Naive thymus-derived CD4-positive, alpha-beta T cell (primary cell): ENCODE measurements at regions of chr16 and their contacts with region 1.

Region 1: DNA sequence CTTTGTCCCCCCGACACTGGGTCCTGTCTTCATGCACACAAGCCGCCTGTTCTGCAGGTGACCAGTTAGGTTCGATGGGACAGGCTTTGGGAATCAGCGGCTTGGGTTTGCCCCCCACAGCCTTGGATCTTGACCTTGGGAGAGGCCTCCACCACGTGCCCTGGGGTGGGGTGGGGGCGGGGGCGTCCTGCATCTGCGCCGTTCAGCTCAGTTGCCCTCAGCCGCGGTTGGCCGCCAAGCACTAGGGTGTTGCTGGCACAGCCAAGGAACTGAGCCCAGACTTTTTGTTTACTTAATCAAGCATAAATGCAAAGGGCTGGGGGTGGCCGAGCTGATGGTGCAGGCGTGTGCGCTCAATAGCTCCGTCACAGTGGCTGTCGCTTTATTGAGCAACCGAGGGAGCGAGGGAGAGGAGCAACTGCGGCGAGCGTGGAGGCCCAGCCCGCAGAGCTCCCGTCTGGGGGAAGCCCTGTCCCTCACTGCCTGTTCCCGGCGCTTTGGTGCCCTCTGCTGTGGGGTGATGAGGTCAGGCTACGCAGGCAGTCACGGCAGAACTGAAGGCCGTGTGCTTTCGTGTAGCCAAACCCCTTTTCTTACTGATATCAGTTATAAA is 33.9 kb downstream of the JPH3 start:
- DNase-seq: peak; percentile 65 to 81 (median 75)
- ATAC-seq: peak; percentile 94
- H3K4me3 ChIP-seq: peak overlapping the region; percentile 56
- H3K4me3 Mint-ChIP-seq: peak overlapping the region; percentile 55 to 91 (median 88)
- H3K27ac ChIP-seq: peak overlapping the region; percentile 53
- H3K27ac Mint-ChIP-seq: peak overlapping the region in 8 of 9 donors; percentile 41 to 94 (median 76)
- H3K4me1 ChIP-seq: peaks cover 6 to 8% of the 10 kb centered on the region in 2 donors
- H3K4me1 Mint-ChIP-seq: peaks cover 3 to 16% (median 11%) of the 10 kb centered on the region in 7 donors
- H3K27me3 ChIP-seq: no peaks in the 10 kb centered on the region
- H3K27me3 Mint-ChIP-seq: peaks cover 0 to 13% (median 6%) of the 10 kb centered on the region in 5 donors

Region 2: GRCh38 chr16:87316923-87317749 is 319.0 kb before region 1 on chr16 and contains the start of gene C16orf95:
- CTCF ChIA-PET with region 1: interaction called, 13 read pairs
- POLR2A ChIA-PET with region 1: interaction called, 3 read pairs
- intact Hi-C with region 1: loop called in 1 of 2 experiments (anchors 2 kb)
- DNase-seq: peak; percentile 93 to 100 (median 96)
- ATAC-seq: peak; percentile 96
- H3K4me3 ChIP-seq: peak within 1 kb of the TSS; percentile 86
- H3K4me3 Mint-ChIP-seq: peak within 1 kb of the TSS; percentile 92 to 100 (median 97)
- H3K27ac ChIP-seq: peak within 1 kb of the TSS; percentile 91
- H3K27ac Mint-ChIP-seq: peak within 1 kb of the TSS; percentile 91 to 99 (median 94)
- H3K4me1 ChIP-seq: peaks cover 8 to 11% of the 10 kb centered on the region in 2 donors
- H3K4me1 Mint-ChIP-seq: peaks cover 11 to 23% (median 16%) of the 10 kb centered on the region in 7 donors
- H3K27me3 ChIP-seq: no peaks in the 10 kb centered on the region
- H3K27me3 Mint-ChIP-seq: peaks cover 0 to 2% (median 0%) of the 10 kb centered on the region in 5 donors
- total RNA-seq, gene C16orf95: 1.3 to 8.6 (median 2.6) TPM

Region 3: GRCh38 chr16:87393680-87394055 is 242.5 kb before region 1 on chr16:
- CTCF ChIA-PET with region 1: interaction called, 7 read pairs
- POLR2A ChIA-PET with region 1: no interaction called
- intact Hi-C with region 1: loop called in 1 of 2 experiments (anchors 1 kb)
- DNase-seq: no peak
- ATAC-seq: no peak
- H3K4me3 ChIP-seq: peak overlapping the region; percentile 84
- H3K4me3 Mint-ChIP-seq: peak overlapping the region; percentile 90 to 96 (median 93)
- H3K27ac ChIP-seq: peak overlapping the region; percentile 89
- H3K27ac Mint-ChIP-seq: peak overlapping the region; percentile 78 to 97 (median 94)
- H3K4me1 ChIP-seq: peaks cover 17 to 22% of the 10 kb centered on the region in 2 donors
- H3K4me1 Mint-ChIP-seq: peaks cover 25 to 55% (median 47%) of the 10 kb centered on the region in 7 donors
- H3K27me3 ChIP-seq: no peaks in the 10 kb centered on the region
- H3K27me3 Mint-ChIP-seq: no peaks in the 10 kb centered on the region

Region 4: GRCh38 chr16:87461466-87461991 is 174.6 kb before region 1 on chr16:
- CTCF ChIA-PET with region 1: interaction called, 8 read pairs
- POLR2A ChIA-PET with region 1: no interaction called
- intact Hi-C with region 1: loop called in 1 of 2 experiments (anchors 1 kb)
- DNase-seq: peak in 1 of 9 donors; percentile 6
- ATAC-seq: no peak
- H3K4me3 ChIP-seq: no peak overlapping the region
- H3K4me3 Mint-ChIP-seq: no peak overlapping the region
- H3K27ac ChIP-seq: no peak overlapping the region
- H3K27ac Mint-ChIP-seq: peak overlapping the region in 4 of 9 donors; percentile 34 to 46 (median 43)
- H3K4me1 ChIP-seq: peaks cover 17 to 27% of the 10 kb centered on the region in 2 donors
- H3K4me1 Mint-ChIP-seq: peaks cover 32 to 43% (median 38%) of the 10 kb centered on the region in 7 donors
- H3K27me3 ChIP-seq: no peaks in the 10 kb centered on the region
- H3K27me3 Mint-ChIP-seq: peaks cover 0 to 4% (median 0%) of the 10 kb centered on the region in 5 donors

Region 5: GRCh38 chr16:87550496-87550961 is 85.6 kb before region 1 on chr16:
- CTCF ChIA-PET with region 1: interaction called, 7 read pairs
- POLR2A ChIA-PET with region 1: no interaction called
- intact Hi-C with region 1: loop called (anchors 1 to 2 kb)
- DNase-seq: peak; percentile 26 to 75 (median 49)
- ATAC-seq: peak; percentile 63
- H3K4me3 ChIP-seq: no peak overlapping the region
- H3K4me3 Mint-ChIP-seq: no peak overlapping the region
- H3K27ac ChIP-seq: no peak overlapping the region
- H3K27ac Mint-ChIP-seq: peak overlapping the region in 1 of 9 donors; percentile 65
- H3K4me1 ChIP-seq: no peaks in the 10 kb centered on the region
- H3K4me1 Mint-ChIP-seq: peaks cover 0 to 11% (median 4%) of the 10 kb centered on the region in 7 donors
- H3K27me3 ChIP-seq: no peaks in the 10 kb centered on the region
- H3K27me3 Mint-ChIP-seq: peaks cover 2 to 31% (median 18%) of the 10 kb centered on the region in 5 donors

Region 6: GRCh38 chr16:87621976-87622713 is 14.0 kb before region 1 on chr16:
- CTCF ChIA-PET with region 1: interaction called, 12 read pairs
- POLR2A ChIA-PET with region 1: no interaction called
- intact Hi-C with region 1: no loop called
- DNase-seq: no peak
- ATAC-seq: no peak
- H3K4me3 ChIP-seq: no peak overlapping the region
- H3K4me3 Mint-ChIP-seq: no peak overlapping the region
- H3K27ac ChIP-seq: no peak overlapping the region
- H3K27ac Mint-ChIP-seq: no peak overlapping the region
- H3K4me1 ChIP-seq: no peaks in the 10 kb centered on the region
- H3K4me1 Mint-ChIP-seq: no peaks in the 10 kb centered on the region
- H3K27me3 ChIP-seq: no peaks in the 10 kb centered on the region
- H3K27me3 Mint-ChIP-seq: peaks cover 0 to 19% (median 0%) of the 10 kb centered on the region in 5 donors